H1 (cell line): ENCODE measurements at regions of chr10 and their contacts with region 1.

Region 1: GRCh38 chr10:71569775-71570588 is 149.6 kb downstream of the C10orf105 start:
- DNase-seq: peak; percentile 59 to 98
- H3K4me3 ChIP-seq: no peak overlapping the region
- H3K27ac ChIP-seq: no peak overlapping the region
- H3K4me1 ChIP-seq: peaks cover 3 to 11% (median 6%) of the 10 kb centered on the region in 4 experiments; a peak in 5 of 7 replicates
- H3K27me3 ChIP-seq: 0 out of 7 replicates have a peak, but pooled peaks cover 0 to 2% (median 0%) of the 10 kb centered on the region in 4 experiments
- CTCF ChIP-seq: peak; percentile 74 to 93 (median 89)
- EP300 ChIP-seq: no peak
- POLR2A ChIP-seq: no peak
- RAD21 ChIP-seq: peak; percentile 87 to 93

Region 2: DNA sequence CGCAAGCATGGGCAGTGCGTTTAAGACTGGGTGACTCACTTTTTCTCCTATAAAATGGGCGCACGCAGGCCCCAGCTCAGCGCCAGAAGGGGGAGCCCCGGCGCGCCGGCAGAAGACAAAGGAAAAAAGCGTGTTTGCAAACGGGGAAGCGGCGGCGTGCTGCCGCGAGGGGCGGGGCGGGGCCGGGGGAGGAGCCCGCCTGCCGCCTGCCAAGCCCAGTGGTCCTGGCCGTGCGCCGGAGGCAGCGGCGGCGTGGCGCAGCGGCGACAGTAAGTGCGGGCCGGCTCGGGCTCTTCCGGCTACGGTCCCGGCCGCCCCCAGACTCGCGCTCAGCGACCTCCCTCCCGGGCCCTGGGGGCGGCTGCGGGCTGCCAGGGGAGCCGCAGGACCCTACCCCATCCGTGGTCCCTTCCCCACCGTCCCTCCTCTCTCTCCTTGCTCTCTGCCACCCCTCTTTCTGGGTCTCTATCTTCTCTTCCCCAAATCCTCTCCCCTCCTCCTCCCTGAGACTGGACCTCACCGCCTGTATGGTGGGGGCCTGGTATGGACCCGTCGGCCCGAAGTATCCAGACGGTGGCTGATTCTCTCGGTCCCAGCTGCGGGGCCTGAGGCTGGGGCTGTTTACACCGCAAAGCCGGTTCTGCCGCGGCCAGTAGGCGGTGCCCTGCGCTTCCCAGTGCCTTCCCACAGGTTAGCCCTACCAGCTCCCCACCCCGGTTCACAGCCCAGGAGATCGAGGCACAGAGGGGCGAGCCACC is 250.8 kb before region 1 on chr10 and contains the start of gene SLC29A3:
- CTCF ChIA-PET with region 1: interaction called, 23 read pairs
- POLR2A ChIA-PET with region 1: no interaction called
- DNase-seq: peak; percentile 44 to 87
- H3K4me3 ChIP-seq: peak within 1 kb of the TSS; percentile 45 to 87 (median 68)
- H3K27ac ChIP-seq: peak within 1 kb of the TSS; percentile 11; the same call in 1 of the 2 replicates
- H3K4me1 ChIP-seq: peaks cover 2 to 10% (median 3%) of the 10 kb centered on the region in 4 experiments; a peak in 4 of 7 replicates
- H3K27me3 ChIP-seq: no peaks in the 10 kb centered on the region
- CTCF ChIP-seq: peak; percentile 76 to 89 (median 88)
- EP300 ChIP-seq: no peak
- POLR2A ChIP-seq: peak in 1 of 2 experiments; percentile 74; a peak in 2 of 3 replicates
- RAD21 ChIP-seq: peak; percentile 76 to 85
- total RNA-seq, gene SLC29A3: 14.0 and 15.2 TPM in 2 replicates

Region 3: DNA sequence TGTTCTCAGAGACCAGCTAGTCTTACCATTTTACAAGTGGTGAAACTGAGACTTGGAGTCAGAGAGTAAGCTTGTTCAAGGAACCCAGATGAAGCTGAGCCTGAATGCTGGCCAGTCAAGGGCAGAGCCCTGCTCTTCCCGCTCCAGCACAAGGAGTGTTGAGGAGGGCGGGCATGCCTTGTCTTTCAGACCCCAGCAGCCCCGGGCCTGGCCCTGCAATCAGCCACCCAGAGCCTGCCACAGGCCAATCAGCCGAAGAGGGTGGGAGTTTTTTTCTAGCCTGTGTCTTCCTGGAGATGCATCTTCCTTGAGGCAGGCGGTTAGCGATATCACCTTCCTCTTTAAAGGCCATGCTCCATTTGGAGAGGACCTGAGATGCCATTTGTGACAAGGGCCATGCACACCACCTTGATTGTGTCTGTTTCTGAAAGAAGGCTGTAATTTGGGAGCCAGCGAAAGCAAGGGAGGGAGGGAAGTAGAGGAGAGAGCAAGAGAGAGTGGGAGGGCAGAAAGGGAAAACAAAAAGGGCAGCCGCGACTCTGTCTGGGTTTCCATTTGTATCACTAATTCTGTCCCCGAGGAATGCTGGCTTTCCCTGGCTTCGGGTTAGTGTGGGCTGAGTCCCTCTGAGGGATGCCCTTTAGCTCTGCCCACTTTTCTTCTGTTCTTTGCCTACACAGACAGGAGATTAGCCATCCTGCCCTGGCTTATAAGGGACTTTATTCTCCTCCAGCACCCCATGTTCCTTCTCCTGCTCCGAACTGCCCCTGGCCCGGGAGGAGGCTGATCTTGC is 165.3 kb before region 1 on chr10:
- CTCF ChIA-PET with region 1: interaction called, 52 read pairs
- POLR2A ChIA-PET with region 1: no interaction called
- DNase-seq: peak in 1 of 2 experiments; percentile 46
- H3K4me3 ChIP-seq: no peak overlapping the region
- H3K27ac ChIP-seq: no peak overlapping the region
- H3K4me1 ChIP-seq: peaks cover 3 to 4% (median 3%) of the 10 kb centered on the region in 4 experiments; a peak in 4 of 7 replicates
- H3K27me3 ChIP-seq: peaks cover 0 to 4% (median 4%) of the 10 kb centered on the region in 4 experiments; a peak in 3 of 7 replicates
- CTCF ChIP-seq: no peak
- EP300 ChIP-seq: no peak
- POLR2A ChIP-seq: no peak
- RAD21 ChIP-seq: no peak

Region 4: GRCh38 chr10:71486484-71487114 is 83.4 kb before region 1 on chr10:
- CTCF ChIA-PET with region 1: interaction called, 70 read pairs
- POLR2A ChIA-PET with region 1: no interaction called
- DNase-seq: peak in 1 of 2 experiments; percentile 93
- H3K4me3 ChIP-seq: no peak overlapping the region
- H3K27ac ChIP-seq: no peak overlapping the region
- H3K4me1 ChIP-seq: peaks cover 0 to 6% (median 1%) of the 10 kb centered on the region in 4 experiments; a peak in 3 of 7 replicates
- H3K27me3 ChIP-seq: no peaks in the 10 kb centered on the region
- CTCF ChIP-seq: peak; percentile 92 to 99 (median 96)
- EP300 ChIP-seq: no peak
- POLR2A ChIP-seq: no peak
- RAD21 ChIP-seq: peak; percentile 92 to 94

Region 5: DNA sequence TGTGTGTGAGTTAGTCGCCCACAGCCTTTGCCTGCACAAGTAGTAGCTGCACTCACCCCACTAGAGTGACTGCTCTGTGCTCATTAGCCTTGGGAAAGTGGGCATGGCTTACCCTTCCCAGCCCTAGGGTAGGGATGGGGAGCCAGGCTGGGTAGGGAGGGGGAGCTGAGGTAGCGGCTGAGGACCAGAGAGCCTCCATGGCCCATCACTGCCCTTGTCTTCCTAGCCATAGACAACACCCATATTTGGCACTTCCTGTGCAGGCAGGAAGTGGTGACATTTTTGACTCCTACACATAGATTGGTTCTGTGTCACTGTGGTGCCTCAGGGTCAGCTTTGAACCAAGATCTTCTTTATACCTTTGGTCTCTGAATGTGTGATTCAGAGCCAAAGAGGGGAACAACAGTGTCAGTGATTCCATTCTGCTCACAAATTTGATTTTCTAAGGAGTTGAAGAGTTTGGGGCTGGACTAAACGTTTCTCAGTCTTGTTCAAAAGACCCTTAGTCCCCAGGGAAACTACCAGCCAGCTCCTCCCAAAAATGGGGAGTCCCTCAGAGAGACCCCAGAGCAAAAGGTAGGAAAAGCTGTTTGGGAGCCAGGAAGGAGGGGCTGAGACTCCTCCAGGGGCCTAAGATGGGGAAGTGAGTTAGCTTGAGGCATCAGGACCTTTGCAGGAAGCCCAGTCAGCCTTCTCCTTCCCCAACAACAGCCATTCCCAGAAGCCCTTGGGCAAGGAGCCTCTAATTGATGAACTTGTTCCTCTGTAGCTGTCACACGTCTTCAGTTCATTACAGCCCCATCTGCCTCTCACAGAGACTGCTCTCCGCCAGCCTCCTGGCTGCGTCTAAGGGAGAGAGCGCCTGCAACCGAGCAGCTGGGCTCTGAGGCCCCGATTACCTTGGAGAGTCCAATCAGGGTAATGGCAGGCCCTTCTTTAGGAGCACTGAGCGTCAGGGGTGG is 38.2 kb before region 1 on chr10:
- CTCF ChIA-PET with region 1: interaction called, 53 read pairs
- POLR2A ChIA-PET with region 1: no interaction called
- DNase-seq: no peak
- H3K4me3 ChIP-seq: no peak overlapping the region
- H3K27ac ChIP-seq: no peak overlapping the region
- H3K4me1 ChIP-seq: peaks cover 4 to 20% (median 16%) of the 10 kb centered on the region in 4 experiments
- H3K27me3 ChIP-seq: no peaks in the 10 kb centered on the region
- CTCF ChIP-seq: no peak
- EP300 ChIP-seq: no peak
- POLR2A ChIP-seq: no peak
- RAD21 ChIP-seq: no peak

Region 6: DNA sequence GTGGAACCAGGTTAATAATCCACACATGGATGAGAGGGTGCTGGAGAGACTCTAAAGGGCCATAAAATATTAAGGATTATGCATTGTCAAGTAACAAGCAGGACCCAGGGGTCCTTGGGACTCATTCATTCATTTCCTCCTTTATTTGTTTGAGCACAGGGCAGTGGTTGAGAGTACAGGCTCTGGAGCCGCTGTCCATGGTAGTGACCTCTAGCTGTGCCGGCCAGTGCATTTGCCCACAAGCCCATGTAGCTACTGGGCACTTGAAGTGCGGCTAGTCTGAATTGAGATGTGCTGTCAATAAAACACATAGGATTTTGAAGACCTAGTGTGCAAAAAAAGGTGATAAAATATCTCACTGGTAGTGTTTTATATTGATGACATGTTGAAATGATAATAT is 12.0 kb after region 1 on chr10:
- CTCF ChIA-PET with region 1: interaction called, 161 read pairs
- POLR2A ChIA-PET with region 1: no interaction called
- DNase-seq: no peak
- H3K4me3 ChIP-seq: no peak overlapping the region
- H3K27ac ChIP-seq: no peak overlapping the region
- H3K4me1 ChIP-seq: peaks cover 0 to 6% (median 3%) of the 10 kb centered on the region in 4 experiments; a peak in 2 of 7 replicates
- H3K27me3 ChIP-seq: no peaks in the 10 kb centered on the region
- CTCF ChIP-seq: no peak
- EP300 ChIP-seq: no peak
- POLR2A ChIP-seq: no peak
- RAD21 ChIP-seq: no peak

Region 7: GRCh38 chr10:71623098-71623985 is 53.4 kb after region 1 on chr10:
- CTCF ChIA-PET with region 1: interaction called, 11 read pairs
- POLR2A ChIA-PET with region 1: no interaction called
- DNase-seq: no peak
- H3K4me3 ChIP-seq: peak overlapping the region in 1 of 4 experiments; percentile 33; a peak in 1 of 8 replicates
- H3K27ac ChIP-seq: no peak overlapping the region
- H3K4me1 ChIP-seq: peaks cover 25 to 52% (median 35%) of the 10 kb centered on the region in 4 experiments
- H3K27me3 ChIP-seq: no peaks in the 10 kb centered on the region
- CTCF ChIP-seq: peak in 2 of 3 experiments; percentile 6 to 46; a peak in 2 of 4 replicates
- EP300 ChIP-seq: no peak
- POLR2A ChIP-seq: no peak
- RAD21 ChIP-seq: peak; percentile 28 to 43; a peak in 3 of 4 replicates